ENCODE measurements at regions of chr1 and their contacts with region 1.

Region 1: GRCh38 chr1:231949277-231950091 is 322.9 kb downstream of the DISC1 start:
- DNase-seq: no peak
- ATAC-seq: no peak
- H3K4me3 ChIP-seq: no peak overlapping the region
- H3K27ac ChIP-seq: no peak overlapping the region
- H3K4me1 ChIP-seq: no peaks in the 10 kb centered on the region
- H3K27me3 ChIP-seq: no peaks in the 10 kb centered on the region
- CTCF ChIP-seq: no peak
- EP300 ChIP-seq: no peak
- POLR2A ChIP-seq: no peak
- RAD21 ChIP-seq: no peak

Region 2: DNA sequence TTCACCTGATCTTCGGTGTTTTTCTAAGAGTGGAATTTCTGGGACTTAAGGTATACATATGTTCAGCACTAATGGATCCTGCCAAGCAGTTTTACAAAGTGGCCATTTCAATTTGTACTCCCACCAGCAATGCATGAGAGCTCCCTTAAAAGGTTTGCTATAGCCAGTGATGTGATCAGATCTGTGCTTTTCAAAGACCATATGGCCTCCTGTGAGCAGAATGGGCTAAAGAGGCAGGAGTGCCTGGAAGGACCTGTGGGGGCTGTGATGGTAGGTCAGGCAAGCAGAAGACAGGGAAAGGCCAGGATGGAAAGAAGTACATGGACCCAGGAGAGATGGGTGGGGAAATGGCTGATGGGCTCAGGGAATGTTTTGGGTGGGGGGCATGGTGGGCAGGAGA is 70.2 kb before region 1 on chr1:
- CTCF ChIA-PET with region 1: no interaction called
- POLR2A ChIA-PET with region 1: no interaction called
- in situ Hi-C with region 1: no loop called
- intact Hi-C with region 1: loop called (anchors 2 kb)
- DNase-seq: no peak
- ATAC-seq: no peak
- H3K4me3 ChIP-seq: no peak overlapping the region
- H3K27ac ChIP-seq: no peak overlapping the region
- H3K4me1 ChIP-seq: no peaks in the 10 kb centered on the region
- H3K27me3 ChIP-seq: no peaks in the 10 kb centered on the region
- CTCF ChIP-seq: no peak
- EP300 ChIP-seq: no peak
- POLR2A ChIP-seq: no peak
- RAD21 ChIP-seq: no peak

Region 3: DNA sequence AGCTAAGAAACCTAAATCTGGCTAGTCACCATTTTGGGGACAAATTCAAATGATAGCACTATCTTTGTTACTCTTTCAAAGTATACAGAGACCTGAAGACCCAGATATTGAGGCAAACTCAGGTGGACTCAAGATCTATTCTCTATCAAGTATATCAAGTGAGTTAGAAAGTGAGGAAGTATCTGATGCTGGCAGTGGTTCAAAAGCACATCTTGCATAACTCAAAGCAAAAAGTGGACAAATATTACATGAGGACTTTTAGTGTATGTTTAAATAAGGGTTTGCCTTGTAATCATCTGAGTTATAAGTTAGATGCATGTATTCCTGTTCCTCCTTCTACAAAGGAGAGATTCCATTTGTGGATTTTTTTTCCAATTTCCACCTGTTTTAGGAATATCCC is 15.5 kb after region 1 on chr1:
- CTCF ChIA-PET with region 1: no interaction called
- POLR2A ChIA-PET with region 1: no interaction called
- in situ Hi-C with region 1: no loop called
- intact Hi-C with region 1: loop called (anchors 1 kb)
- DNase-seq: no peak
- ATAC-seq: no peak
- H3K4me3 ChIP-seq: no peak overlapping the region
- H3K27ac ChIP-seq: no peak overlapping the region
- H3K4me1 ChIP-seq: no peaks in the 10 kb centered on the region
- H3K27me3 ChIP-seq: no peaks in the 10 kb centered on the region; a peak in 1 of 5 replicates
- CTCF ChIP-seq: no peak
- EP300 ChIP-seq: no peak
- POLR2A ChIP-seq: no peak
- RAD21 ChIP-seq: no peak